MCF 10A (cell line): ENCODE measurements at regions of chr10 and their contacts with region 1.

Region 1: DNA sequence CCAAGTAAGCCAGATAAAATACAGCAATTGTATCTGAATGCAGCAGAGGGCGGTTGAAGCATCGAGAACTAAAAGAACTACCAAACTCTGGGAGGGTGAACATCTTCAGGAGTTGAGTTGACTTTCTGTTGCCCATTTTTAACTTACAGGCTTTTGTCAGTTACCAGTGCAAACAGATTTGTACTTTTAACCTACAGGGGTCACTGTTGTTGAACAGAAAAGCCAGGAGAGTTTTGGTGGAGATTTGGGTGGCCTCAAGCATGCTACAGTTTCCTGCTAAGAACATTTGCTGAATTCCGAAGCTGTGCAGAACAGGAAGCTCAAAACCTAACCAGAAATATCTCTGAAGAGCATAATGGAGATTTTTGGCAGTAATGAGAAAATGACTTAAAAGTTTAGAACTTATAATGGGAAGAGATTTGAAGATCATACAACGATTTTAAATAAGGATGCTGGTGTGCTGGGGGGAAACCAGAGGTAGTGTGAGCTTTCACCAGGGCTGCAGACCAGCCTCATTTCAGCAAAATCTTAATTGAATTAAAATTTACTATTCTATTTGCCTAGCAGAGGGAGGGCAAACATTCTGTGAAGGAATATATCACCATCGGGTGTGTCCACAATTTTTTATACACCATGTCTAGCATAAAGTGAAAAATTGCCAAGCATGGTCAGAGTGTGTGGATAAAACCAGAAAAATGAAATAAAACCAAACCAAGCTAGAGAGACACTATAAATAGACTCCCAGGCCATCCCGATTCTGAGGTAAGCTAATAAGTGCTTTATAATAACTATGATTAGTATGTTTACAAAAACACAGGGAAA is 208.6 kb upstream of the CCDC6 start:
- DNase-seq: peak; percentile 70
- H3K4me3 Mint-ChIP-seq: no peak overlapping the region
- H3K27ac Mint-ChIP-seq: no peak overlapping the region
- H3K4me1 Mint-ChIP-seq: no peaks in the 10 kb centered on the region
- H3K27me3 Mint-ChIP-seq: no peaks in the 10 kb centered on the region
- CTCF ChIP-seq: peak; percentile 57

Region 2: GRCh38 chr10:60135020-60135419 is 20.0 kb after region 1 on chr10:
- CTCF ChIA-PET with region 1: interaction called, 23 read pairs
- POLR2A ChIA-PET with region 1: interaction called, 3 read pairs
- intact Hi-C with region 1: no loop called
- DNase-seq: no peak
- H3K4me3 Mint-ChIP-seq: no peak overlapping the region
- H3K27ac Mint-ChIP-seq: no peak overlapping the region
- H3K4me1 Mint-ChIP-seq: peaks cover 6% of the 10 kb centered on the region
- H3K27me3 Mint-ChIP-seq: no peaks in the 10 kb centered on the region
- CTCF ChIP-seq: no peak

Region 3: DNA sequence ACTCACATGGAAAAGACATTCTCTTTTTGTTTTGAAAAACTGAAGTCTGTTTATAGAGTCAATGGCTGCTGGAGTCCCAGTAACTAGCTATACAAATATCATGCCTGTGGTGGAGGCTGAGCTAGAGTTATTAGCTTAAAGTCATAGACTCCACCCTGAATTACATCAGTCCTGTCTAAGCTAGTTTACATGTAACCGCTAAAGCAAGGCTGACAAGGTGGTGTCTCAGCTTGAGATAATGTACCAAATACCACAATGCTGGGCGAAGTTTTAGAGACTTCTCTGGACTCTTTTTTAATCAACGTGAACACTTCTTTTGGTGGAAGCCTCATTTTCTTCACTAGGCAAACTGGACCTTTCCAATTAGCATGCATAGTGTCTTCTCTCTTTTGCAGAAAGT is 55.3 kb after region 1 on chr10:
- CTCF ChIA-PET with region 1: interaction called, 15 read pairs
- POLR2A ChIA-PET with region 1: no interaction called
- intact Hi-C with region 1: no loop called
- DNase-seq: no peak
- H3K4me3 Mint-ChIP-seq: no peak overlapping the region
- H3K27ac Mint-ChIP-seq: no peak overlapping the region
- H3K4me1 Mint-ChIP-seq: peaks cover 5% of the 10 kb centered on the region
- H3K27me3 Mint-ChIP-seq: no peaks in the 10 kb centered on the region
- CTCF ChIP-seq: no peak

Region 4: DNA sequence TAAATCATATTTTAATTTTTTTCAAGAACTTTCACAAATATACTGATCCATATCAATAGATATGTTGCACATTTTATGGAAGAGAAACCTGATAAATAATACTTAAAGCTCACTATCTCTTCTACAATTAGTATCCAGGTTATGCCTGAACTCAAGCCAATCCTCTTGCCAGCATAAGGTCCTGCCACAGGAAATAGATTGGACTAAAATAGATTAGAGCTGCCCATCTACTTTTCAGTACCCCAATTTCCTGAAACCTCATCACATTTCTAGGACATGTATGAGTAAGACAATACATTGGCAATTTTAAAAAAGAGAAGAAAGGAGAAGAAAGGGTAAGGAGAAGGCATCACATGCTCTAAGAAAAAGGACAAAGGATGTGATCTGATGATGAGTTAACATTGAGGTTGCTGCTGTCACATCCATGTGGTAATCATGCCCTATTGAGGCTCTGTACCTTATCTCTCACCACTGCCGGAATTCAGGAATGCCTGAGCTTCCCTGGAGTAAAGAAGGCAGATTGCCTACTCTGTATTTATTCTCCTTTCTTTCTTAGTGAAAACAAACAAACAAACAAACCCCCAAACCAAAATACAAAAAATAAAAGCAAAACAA is 75.0 kb after region 1 on chr10:
- CTCF ChIA-PET with region 1: interaction called, 10 read pairs
- POLR2A ChIA-PET with region 1: no interaction called
- intact Hi-C with region 1: no loop called
- DNase-seq: no peak
- H3K4me3 Mint-ChIP-seq: no peak overlapping the region
- H3K27ac Mint-ChIP-seq: no peak overlapping the region
- H3K4me1 Mint-ChIP-seq: no peaks in the 10 kb centered on the region
- H3K27me3 Mint-ChIP-seq: no peaks in the 10 kb centered on the region
- CTCF ChIP-seq: no peak

Region 5: GRCh38 chr10:60197206-60197605 is 82.2 kb after region 1 on chr10:
- CTCF ChIA-PET with region 1: interaction called, 16 read pairs
- POLR2A ChIA-PET with region 1: no interaction called
- intact Hi-C with region 1: no loop called
- DNase-seq: no peak
- H3K4me3 Mint-ChIP-seq: no peak overlapping the region
- H3K27ac Mint-ChIP-seq: no peak overlapping the region
- H3K4me1 Mint-ChIP-seq: no peaks in the 10 kb centered on the region
- H3K27me3 Mint-ChIP-seq: no peaks in the 10 kb centered on the region
- CTCF ChIP-seq: no peak

Region 6: GRCh38 chr10:60426400-60426799 is 311.4 kb after region 1 on chr10:
- CTCF ChIA-PET with region 1: interaction called, 16 read pairs
- POLR2A ChIA-PET with region 1: interaction called, 3 read pairs
- intact Hi-C with region 1: no loop called
- DNase-seq: peak; percentile 83
- H3K4me3 Mint-ChIP-seq: no peak overlapping the region
- H3K27ac Mint-ChIP-seq: peak overlapping the region; percentile 81
- H3K4me1 Mint-ChIP-seq: peaks cover 57% of the 10 kb centered on the region
- H3K27me3 Mint-ChIP-seq: no peaks in the 10 kb centered on the region
- CTCF ChIP-seq: no peak

Region 7: DNA sequence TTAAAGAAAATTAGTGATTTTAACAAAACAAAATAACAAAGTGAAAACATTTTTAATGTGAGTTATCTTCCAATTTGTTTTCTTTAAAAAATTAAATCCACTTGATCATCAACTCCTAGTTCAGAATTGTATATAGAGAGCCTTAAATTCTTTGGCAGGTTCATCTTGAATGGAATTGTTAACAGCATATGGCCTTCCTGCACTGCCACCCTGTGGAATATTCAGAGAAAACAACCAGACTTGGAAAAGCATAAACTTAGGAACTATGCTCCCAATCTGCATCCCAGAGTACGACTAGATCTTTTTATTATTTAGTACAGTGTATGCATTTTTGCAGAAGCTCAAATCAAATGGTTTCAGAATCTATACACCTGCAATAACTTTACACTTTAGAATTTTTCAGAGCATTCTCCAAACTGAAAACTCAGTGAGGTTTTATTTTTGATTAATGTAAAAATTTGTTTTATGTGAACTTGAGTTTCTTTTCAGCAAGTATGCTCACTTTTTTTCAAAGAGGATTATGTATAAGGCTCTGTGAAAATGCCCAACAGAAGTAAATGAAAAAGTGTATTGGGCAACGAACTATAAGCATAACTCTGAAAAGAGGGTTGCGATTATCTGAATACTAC is 319.6 kb after region 1 on chr10:
- CTCF ChIA-PET with region 1: interaction called, 16 read pairs
- POLR2A ChIA-PET with region 1: no interaction called
- intact Hi-C with region 1: loop called (anchors 1 kb)
- DNase-seq: peak; percentile 69
- H3K4me3 Mint-ChIP-seq: no peak overlapping the region
- H3K27ac Mint-ChIP-seq: no peak overlapping the region
- H3K4me1 Mint-ChIP-seq: peaks cover 20% of the 10 kb centered on the region
- H3K27me3 Mint-ChIP-seq: no peaks in the 10 kb centered on the region
- CTCF ChIP-seq: peak; percentile 68